Breast epithelium (tissue), 4 donors: ENCODE measurements at regions of chrX and their contacts with region 1.

Region 1: GRCh38 chrX:148282504-148282903 is 217.9 kb upstream of the AFF2 start:
- DNase-seq: no peak
- H3K4me3 ChIP-seq: no peak overlapping the region
- H3K27ac ChIP-seq: no peak overlapping the region
- H3K4me1 ChIP-seq: no peaks in the 10 kb centered on the region
- H3K27me3 ChIP-seq: no peaks in the 10 kb centered on the region
- CTCF ChIP-seq: no peak
- POLR2A ChIP-seq: no peak

Region 2: DNA sequence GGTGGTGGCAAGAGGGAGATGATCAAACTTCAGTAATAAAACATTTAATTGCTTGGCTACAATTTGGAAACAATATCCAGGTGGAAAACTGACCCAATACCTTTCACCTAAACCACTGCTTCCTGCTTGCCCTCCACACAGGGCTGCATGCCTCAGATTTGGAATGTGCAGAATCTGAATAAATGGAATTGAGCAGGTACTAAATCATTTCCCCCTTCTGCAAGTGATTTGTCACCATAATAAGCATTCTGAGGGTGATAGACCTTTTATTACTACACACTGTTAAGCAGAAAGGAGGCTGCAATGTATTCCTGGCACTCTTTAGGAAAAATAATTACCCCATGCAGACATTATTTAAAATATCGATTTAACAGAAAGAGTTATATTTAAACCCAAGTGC is 930.8 kb after region 1 on chrX:
- intact Hi-C with region 1: loop called (anchors 10 kb)
- DNase-seq: no peak
- H3K4me3 ChIP-seq: no peak overlapping the region
- H3K27ac ChIP-seq: no peak overlapping the region
- H3K4me1 ChIP-seq: no peaks in the 10 kb centered on the region
- H3K27me3 ChIP-seq: peaks cover 0 to 4% of the 10 kb centered on the region in 2 donors
- CTCF ChIP-seq: no peak
- POLR2A ChIP-seq: no peak

Region 3: GRCh38 chrX:150084496-150085229 is 1802.2 kb after region 1 on chrX:
- intact Hi-C with region 1: no loop called
- DNase-seq: no peak
- H3K4me3 ChIP-seq: no peak overlapping the region
- H3K27ac ChIP-seq: peak overlapping the region in 1 of 2 donors; percentile 34
- H3K4me1 ChIP-seq: no peaks in the 10 kb centered on the region
- H3K27me3 ChIP-seq: peaks cover 0 to 31% of the 10 kb centered on the region in 2 donors
- CTCF ChIP-seq: no peak
- POLR2A ChIP-seq: no peak